ENCODE measurements at regions of chr9 and their contacts with region 1.

Region 1: DNA sequence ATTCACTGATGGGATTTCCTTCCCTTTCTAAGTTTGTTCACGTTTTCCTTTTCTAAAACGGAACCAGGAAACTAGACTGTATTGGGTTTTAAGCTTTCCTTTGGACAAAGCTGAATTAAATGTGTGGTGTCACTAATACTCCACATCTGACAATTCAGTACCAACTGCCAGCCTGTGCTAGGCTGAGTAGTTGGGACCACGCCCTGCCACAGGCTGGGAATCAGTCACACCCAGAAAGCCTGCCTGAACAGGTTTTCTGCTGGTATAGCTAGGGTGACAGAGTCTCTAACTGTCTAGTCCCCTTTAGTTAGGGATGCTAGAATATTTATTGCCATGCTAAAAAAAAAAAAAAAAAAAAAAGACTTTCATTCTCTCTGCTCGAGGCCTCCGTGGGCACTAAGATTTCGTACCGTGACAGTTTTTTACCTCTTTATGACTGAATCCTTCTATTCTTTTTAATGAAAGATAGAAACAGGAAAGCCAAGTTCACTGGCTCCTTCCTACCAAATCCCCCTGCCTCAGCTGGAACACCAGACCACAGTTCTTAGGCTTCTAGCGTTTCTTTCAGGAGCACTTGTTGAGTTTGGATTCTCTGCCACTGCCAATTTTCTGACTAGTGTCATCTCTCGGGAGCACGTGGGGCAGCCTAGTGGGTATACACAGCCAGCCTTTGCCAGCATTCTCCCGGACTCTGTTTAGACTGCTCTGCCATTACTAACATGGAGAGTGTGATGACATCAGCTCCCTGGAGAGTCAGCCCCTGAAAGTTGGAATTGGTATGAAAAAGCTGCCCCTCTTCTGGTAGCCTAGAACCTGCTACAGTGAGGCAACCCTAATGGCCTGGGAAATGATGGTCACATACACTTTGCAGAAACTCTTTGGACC is 15.9 kb downstream of the SPACA9 start:
- DNase-seq: peak; percentile 59
- H3K4me3 ChIP-seq: no peak overlapping the region
- H3K27ac ChIP-seq: no peak overlapping the region
- H3K4me1 ChIP-seq: peaks cover 15% of the 10 kb centered on the region
- H3K27me3 ChIP-seq: no peaks in the 10 kb centered on the region
- CTCF ChIP-seq: no peak

Region 2: DNA sequence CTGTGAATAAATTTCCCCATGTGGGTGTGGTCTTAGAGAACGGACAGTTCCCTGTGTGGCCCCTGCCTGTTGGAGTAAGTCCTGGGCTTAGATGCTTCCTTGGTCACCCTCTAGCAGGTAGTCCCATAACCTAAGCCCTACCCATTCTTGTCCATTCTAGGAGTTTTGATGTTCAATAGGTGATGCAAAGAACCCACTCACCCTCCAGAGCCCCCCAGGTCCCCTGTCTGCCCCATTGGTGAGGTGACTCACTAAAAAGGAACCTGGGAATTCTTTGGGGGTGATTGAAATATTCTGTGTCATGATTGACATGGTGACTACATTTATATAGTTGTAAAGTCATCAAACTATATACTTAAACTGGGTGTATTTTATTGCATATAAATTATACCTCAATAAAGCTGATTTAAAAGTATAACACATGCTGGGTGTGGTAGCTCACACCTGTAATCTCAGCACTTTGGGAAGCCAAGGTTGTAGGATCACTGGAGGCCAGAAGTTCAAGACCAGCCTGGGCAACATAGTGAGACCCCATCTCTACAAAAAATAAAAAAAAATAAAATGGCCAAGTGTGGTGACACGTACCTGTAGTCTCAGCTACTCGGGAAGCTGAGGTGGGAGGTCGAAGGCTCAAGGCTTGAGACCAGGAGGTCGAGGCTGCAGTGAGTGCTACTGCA is 115.4 kb after region 1 on chr9:
- CTCF ChIA-PET with region 1: no interaction called
- dilution Hi-C with region 1: loop called (anchors 5 kb)
- in situ Hi-C with region 1: no loop called
- intact Hi-C with region 1: no loop called
- DNase-seq: no peak
- H3K4me3 ChIP-seq: no peak overlapping the region
- H3K27ac ChIP-seq: no peak overlapping the region
- H3K4me1 ChIP-seq: no peaks in the 10 kb centered on the region
- H3K27me3 ChIP-seq: no peaks in the 10 kb centered on the region
- CTCF ChIP-seq: no peak

Region 3: GRCh38 chr9:133060417-133060841 is 165.8 kb after region 1 on chr9:
- CTCF ChIA-PET with region 1: no interaction called
- dilution Hi-C with region 1: no loop called
- in situ Hi-C with region 1: no loop called
- intact Hi-C with region 1: no loop called
- DNase-seq: no peak
- H3K4me3 ChIP-seq: no peak overlapping the region
- H3K27ac ChIP-seq: no peak overlapping the region
- H3K4me1 ChIP-seq: peaks cover 30% of the 10 kb centered on the region
- H3K27me3 ChIP-seq: no peaks in the 10 kb centered on the region
- CTCF ChIP-seq: no peak